ENCODE measurements at regions of chr2 and their contacts with region 1.

Region 1: DNA sequence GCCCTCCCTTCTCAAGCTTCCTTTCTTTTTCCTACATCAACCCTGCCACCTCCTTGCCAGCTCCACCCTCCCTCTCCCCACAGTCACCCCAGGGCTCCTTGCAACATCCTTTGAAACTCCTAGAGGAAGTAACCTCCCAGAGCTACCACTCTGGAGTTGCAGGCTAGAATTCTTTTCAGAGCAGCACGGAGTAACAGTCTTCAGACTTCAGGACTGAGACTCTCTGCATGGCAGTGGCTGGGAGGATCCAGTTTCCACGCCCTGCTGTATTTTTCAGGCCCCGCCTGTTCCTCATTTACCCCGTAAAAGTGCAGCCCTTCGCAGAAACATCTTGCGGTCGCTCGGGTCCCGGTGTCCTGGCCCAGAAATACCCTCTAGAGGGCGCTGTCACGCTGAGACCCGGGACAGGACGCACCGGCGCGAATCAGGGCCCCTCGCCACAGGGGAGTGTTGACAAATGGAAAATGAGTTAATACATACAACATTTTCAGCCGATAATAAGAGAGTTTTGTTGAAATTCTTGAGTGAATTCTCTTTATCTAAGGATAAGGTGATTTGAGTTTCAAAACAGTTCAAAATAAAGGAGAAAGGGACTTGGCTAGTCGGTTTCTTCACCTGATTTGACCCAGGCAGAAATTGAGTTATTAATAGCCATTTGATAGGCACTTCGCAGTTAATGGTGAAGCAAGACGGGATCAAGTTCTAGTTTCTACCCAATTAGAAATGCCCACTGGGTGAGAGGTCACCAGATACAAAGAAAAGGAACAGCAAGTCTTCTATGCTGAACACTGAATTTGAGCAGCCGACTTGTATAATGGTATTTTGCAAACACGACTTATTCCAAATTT is 18.5 kb upstream of the NTSR2 start:
- ATAC-seq: peak; percentile 90 to 94 (median 92)
- H3K4me3 ChIP-seq: no peak overlapping the region
- H3K27ac ChIP-seq: no peak overlapping the region
- H3K4me1 ChIP-seq: peaks cover 5 to 8% of the 10 kb centered on the region in 2 donors

Region 2: DNA sequence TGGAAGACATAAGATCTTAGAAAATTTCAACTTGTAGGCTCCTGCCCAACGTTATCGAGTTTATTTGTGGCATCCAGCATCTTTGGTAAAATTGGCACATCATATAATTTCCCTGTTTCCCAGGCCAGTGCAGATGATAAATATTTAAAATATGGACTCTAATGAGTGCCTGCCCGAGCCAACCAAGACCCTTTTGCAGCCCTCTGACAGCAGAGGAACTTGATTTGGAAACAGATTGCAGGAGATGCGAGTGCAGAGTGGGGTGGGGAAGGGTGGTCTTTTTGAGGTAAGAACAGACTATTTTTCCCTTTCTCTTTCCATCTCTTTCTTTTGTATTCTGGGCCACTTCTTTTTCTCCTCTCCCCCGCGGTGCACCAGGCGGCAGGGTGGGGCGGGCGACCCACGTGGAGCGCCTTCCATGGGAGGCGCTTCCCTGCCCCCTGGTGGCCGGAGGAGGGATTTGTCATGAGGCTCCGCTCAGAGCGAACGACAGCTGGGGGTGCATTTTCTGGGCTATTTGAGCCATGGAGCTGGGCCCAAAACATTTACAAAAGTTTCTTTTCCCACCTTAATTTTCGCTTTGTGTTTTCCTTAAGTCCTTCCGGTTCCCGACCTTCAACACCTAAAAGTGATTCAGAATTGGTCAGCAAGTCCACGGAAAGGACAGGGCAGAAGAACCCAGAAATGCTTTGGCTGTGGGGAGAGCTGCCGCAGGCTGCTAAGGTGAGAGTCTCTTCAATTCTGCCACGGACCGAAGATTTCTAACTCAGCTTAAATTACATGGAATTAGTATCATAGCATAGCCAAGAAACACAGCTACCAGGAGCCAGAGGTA is 90.7 kb after region 1 on chr2:
- in situ Hi-C with region 1: loop called in 4 of 9 experiments (anchors 5 to 25 kb)
- ATAC-seq: peak; percentile 82 to 93 (median 86)
- H3K4me3 ChIP-seq: no peak overlapping the region
- H3K27ac ChIP-seq: no peak overlapping the region
- H3K4me1 ChIP-seq: no peaks in the 10 kb centered on the region

Region 3: GRCh38 chr2:11784747-11785610 is 96.5 kb after region 1 on chr2:
- in situ Hi-C with region 1: loop called in 4 of 9 experiments (anchors 5 to 25 kb)
- ATAC-seq: peak; percentile 77 to 96 (median 94)
- H3K4me3 ChIP-seq: peak overlapping the region; percentile 24 to 37 (median 33)
- H3K27ac ChIP-seq: peak overlapping the region in 1 of 2 donors; percentile 35
- H3K4me1 ChIP-seq: no peaks in the 10 kb centered on the region

Region 4: DNA sequence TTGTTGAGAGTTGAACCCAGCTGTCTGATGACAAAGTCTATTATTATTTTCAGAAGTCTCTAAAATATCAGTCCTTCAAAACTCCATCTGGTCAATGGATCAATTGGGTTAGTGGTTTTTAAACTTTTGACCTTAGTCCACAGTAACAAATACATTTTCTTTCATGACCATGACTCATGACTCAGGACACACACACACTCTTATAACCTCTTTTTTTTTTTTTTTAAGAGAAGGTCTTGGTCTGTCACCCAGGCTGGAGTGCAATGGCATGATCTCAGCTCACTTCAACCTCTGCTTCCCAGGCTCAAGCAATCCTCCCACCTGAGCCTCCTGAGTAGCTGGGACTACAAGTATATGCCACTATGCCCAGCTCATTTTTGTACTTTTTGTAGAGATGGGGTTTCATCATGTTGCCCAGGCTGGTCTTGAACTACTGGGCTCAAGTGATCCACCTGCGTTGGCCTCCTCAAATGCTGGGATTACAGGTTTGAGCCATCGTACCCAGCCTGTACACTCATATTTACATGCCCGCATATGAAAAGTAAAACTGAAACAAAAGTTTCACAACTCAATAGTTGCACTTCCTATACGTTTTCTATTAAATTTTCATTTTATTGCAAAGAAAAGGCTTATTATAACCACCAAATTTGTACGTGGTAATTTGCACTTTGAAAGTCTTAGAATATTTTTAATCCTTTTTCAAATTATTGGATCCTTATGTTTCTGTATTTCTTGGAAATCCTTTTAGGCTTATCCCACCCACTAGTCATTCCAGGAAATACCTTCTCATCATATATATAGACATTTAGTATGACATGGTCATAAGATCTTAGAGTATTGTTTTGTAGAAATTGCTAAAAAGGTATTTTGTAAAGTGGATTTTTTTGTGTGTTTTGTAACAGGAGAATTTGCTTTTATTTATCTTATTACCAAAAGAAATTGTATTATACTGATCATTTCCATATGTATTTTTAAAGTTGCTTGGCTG is 257.0 kb after region 1 on chr2:
- in situ Hi-C with region 1: loop called in 1 of 9 experiments (anchors 25 kb)
- ATAC-seq: peak in 1 of 8 experiments; percentile 9
- H3K4me3 ChIP-seq: no peak overlapping the region
- H3K27ac ChIP-seq: no peak overlapping the region
- H3K4me1 ChIP-seq: peaks cover 4 to 9% of the 10 kb centered on the region in 2 donors

Region 5: GRCh38 chr2:12452211-12452610 is 763.8 kb after region 1 on chr2:
- in situ Hi-C with region 1: no loop called
- ATAC-seq: peak in 5 of 8 experiments; percentile 32 to 80 (median 64)
- H3K4me3 ChIP-seq: no peak overlapping the region
- H3K27ac ChIP-seq: no peak overlapping the region
- H3K4me1 ChIP-seq: peaks cover 10 to 15% of the 10 kb centered on the region in 2 donors